ENCODE measurements at regions of chr6 and their contacts with region 1.

Region 1: DNA sequence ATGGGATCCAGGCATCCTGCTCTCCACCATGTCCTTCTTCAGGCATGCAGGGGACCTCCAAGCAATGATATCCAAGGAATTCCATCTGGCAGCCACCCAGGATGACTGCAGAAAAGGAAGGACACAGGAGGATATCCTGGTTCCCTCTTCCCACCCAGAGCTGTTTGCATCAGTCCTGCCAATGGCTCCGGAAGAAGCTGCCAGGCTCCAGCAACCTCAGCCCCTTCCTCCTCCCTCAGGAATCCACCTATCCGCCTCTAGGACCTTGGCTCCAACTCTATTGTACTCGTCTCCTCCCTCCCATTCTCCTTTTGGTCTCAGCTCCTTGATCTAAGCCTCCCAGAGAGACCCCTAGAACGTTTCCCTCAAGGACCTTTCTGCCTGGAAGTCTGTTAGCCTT is 733 bp upstream of the PSORS1C2 start:
- DNase-seq: no peak
- H3K4me3 Mint-ChIP-seq: no peak overlapping the region
- H3K27ac Mint-ChIP-seq: no peak overlapping the region
- H3K4me1 Mint-ChIP-seq: peaks cover 3% of the 10 kb centered on the region
- H3K27me3 Mint-ChIP-seq: peaks cover 2% of the 10 kb centered on the region

Region 2: GRCh38 chr6:31158140-31158862 is 18.7 kb after region 1 on chr6 and contains the start of gene TCF19:
- intact Hi-C with region 1: loop called (anchors 2 kb)
- DNase-seq: peak; percentile 99
- H3K4me3 Mint-ChIP-seq: peak within 1 kb of the TSS; percentile 92
- H3K27ac Mint-ChIP-seq: peak within 1 kb of the TSS; percentile 87
- H3K4me1 Mint-ChIP-seq: peaks cover 32% of the 10 kb centered on the region
- H3K27me3 Mint-ChIP-seq: no peaks in the 10 kb centered on the region
- total RNA-seq, gene TCF19: 81.5 and 82.0 TPM in 2 replicates

Region 3: DNA sequence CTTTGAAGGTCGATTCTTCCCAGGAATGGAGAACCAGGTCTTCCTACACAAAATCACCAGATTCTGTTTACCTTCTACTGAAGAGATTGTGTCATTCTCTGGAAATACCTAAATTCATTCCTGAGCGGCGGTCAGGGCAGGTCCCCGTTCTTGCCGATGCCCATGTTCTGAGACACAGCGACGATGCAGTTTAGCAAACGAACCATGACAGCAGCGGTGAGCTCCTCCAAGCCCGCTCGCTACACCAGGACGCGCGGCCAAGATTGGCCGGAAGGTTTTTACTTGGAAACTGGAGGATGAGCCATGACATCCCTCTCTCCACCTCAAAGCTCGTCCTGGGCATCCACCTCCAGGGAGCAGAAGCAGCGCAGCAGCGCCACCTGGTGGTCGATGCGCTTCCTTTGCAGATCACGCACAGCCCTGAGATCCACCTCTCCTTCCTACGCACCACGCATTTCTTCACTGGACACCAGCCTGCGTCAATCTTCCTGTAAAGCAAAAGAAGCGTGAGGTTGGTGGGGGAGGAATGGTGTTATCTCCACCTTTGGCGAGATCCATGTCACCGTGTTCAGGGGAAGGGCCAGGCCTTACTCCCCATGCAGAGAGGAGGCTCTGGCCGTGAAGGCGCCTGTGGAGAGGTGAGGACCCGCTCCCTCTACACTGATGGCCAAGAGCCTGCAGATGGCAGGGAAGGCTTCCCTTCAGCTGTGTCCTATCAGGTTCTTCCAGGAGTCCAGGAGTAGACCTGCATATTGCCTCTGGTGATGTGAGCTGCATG is 227.3 kb after region 1 on chr6:
- intact Hi-C with region 1: loop called (anchors 1 kb)
- DNase-seq: peak; percentile 80
- H3K4me3 Mint-ChIP-seq: peak overlapping the region; percentile 49
- H3K27ac Mint-ChIP-seq: no peak overlapping the region
- H3K4me1 Mint-ChIP-seq: peaks cover 13% of the 10 kb centered on the region
- H3K27me3 Mint-ChIP-seq: peaks cover 70% of the 10 kb centered on the region